ENCODE measurements at regions of chr4 and their contacts with region 1.

Region 1: DNA sequence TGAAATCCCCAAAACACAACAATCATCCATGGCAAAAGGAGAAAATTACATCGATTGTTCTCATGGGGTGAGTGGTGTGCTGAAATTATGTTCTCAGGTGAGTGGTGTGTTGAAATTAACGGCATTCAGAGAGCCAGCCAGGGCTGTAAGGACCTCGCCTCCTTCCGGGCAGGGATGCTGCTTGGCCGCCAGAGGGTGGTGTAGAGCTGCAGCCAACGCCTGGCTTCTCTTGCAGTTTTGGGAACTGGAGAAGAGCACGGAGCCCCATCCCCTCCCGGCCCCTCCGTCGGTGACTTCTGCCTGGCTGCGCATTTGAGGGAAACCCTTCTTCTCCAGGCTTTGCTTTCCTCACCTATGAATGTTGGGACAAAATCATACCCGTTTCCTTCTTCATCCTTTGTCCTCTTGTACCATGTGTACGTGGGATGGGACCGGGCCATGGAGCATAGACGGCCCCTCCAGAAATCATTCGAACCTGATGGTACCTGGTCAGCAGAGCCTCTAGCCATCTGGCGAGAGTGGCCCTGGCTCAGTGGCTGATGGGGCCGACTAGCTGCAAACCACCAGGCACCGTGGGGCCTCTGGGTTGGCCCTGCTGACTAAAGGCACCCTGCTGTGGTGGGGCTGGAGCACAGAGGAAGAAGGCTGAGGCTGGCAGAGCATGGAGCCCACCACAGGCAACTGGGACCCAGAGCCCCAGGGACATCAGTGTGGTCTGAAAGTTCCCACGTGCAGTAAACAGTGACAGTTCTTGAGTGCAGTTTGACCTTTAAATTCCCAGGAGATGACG is 28.4 kb downstream of the TRMT44 start:
- DNase-seq: peak; percentile 50
- H3K4me3 ChIP-seq: no peak overlapping the region
- H3K27ac ChIP-seq: no peak overlapping the region
- H3K4me1 ChIP-seq: no peaks in the 10 kb centered on the region
- H3K27me3 ChIP-seq: no peaks in the 10 kb centered on the region
- CTCF ChIP-seq: peak; percentile 86 to 89 (median 89)
- POLR2A ChIP-seq: no peak

Region 2: GRCh38 chr4:8340781-8341241 is 128.1 kb before region 1 on chr4:
- intact Hi-C with region 1: no loop called
- DNase-seq: no peak
- H3K4me3 ChIP-seq: no peak overlapping the region
- H3K27ac ChIP-seq: peak overlapping the region in 1 of 2 donors; percentile 8
- H3K4me1 ChIP-seq: no peaks in the 10 kb centered on the region
- H3K27me3 ChIP-seq: no peaks in the 10 kb centered on the region
- CTCF ChIP-seq: no peak
- POLR2A ChIP-seq: no peak

Region 3: GRCh38 chr4:8440492-8441341 is 28.2 kb before region 1 on chr4 and contains the starts of genes ACOX3 and TRMT44:
- intact Hi-C with region 1: no loop called
- DNase-seq: peak; percentile 91
- H3K4me3 ChIP-seq: peak within 1 kb of the TSS; percentile 67 to 97
- H3K27ac ChIP-seq: peak within 1 kb of the TSS; percentile 92 to 93
- H3K4me1 ChIP-seq: peaks cover 16% of the 10 kb centered on the region
- H3K27me3 ChIP-seq: no peaks in the 10 kb centered on the region
- CTCF ChIP-seq: peak in 1 of 4 experiments; percentile 40
- POLR2A ChIP-seq: peak; percentile 69
- total RNA-seq, gene ACOX3: 65.7 to 75.4 TPM
- total RNA-seq, gene TRMT44: 35.2 to 63.9 TPM

Region 4: GRCh38 chr4:8506373-8507188 is 37.6 kb after region 1 on chr4:
- intact Hi-C with region 1: loop called (anchors 5 kb)
- DNase-seq: no peak
- H3K4me3 ChIP-seq: no peak overlapping the region
- H3K27ac ChIP-seq: peak overlapping the region; percentile 28 to 70
- H3K4me1 ChIP-seq: peaks cover 6% of the 10 kb centered on the region
- H3K27me3 ChIP-seq: no peaks in the 10 kb centered on the region
- CTCF ChIP-seq: no peak
- POLR2A ChIP-seq: no peak

Region 5: GRCh38 chr4:8547108-8547970 is 78.4 kb after region 1 on chr4:
- intact Hi-C with region 1: loop called (anchors 5 kb)
- DNase-seq: no peak
- H3K4me3 ChIP-seq: no peak overlapping the region
- H3K27ac ChIP-seq: no peak overlapping the region
- H3K4me1 ChIP-seq: no peaks in the 10 kb centered on the region
- H3K27me3 ChIP-seq: no peaks in the 10 kb centered on the region
- CTCF ChIP-seq: peak in 3 of 4 experiments; percentile 27 to 52 (median 45)
- POLR2A ChIP-seq: no peak

Region 6: GRCh38 chr4:8594097-8595038 is 125.4 kb after region 1 on chr4:
- intact Hi-C with region 1: loop called (anchors 2 kb)
- DNase-seq: peak; percentile 55
- H3K4me3 ChIP-seq: no peak overlapping the region
- H3K27ac ChIP-seq: no peak overlapping the region
- H3K4me1 ChIP-seq: peaks cover 7% of the 10 kb centered on the region
- H3K27me3 ChIP-seq: peaks cover 12% of the 10 kb centered on the region
- CTCF ChIP-seq: peak; percentile 20 to 72 (median 64)
- POLR2A ChIP-seq: no peak